Right lobe of liver (tissue), 6 donors: ENCODE measurements at regions of chr2 and their contacts with region 1.

Region 1: GRCh38 chr2:121319953-121320352 is 35.0 kb upstream of the TFCP2L1 start:
- DNase-seq: no peak
- ATAC-seq: peak in 3 of 4 donors; percentile 19 to 50 (median 21)
- H3K4me3 ChIP-seq: no peak overlapping the region
- H3K27ac ChIP-seq: no peak overlapping the region
- H3K4me1 ChIP-seq: no peaks in the 10 kb centered on the region
- H3K27me3 ChIP-seq: no peaks in the 10 kb centered on the region
- CTCF ChIP-seq: no peak
- POLR2A ChIP-seq: no peak

Region 2: GRCh38 chr2:120820263-120820952 is 499.5 kb before region 1 on chr2:
- intact Hi-C with region 1: loop called in 1 of 2 experiments (anchors 5 kb)
- DNase-seq: no peak
- ATAC-seq: no peak
- H3K4me3 ChIP-seq: no peak overlapping the region
- H3K27ac ChIP-seq: no peak overlapping the region
- H3K4me1 ChIP-seq: no peaks in the 10 kb centered on the region
- H3K27me3 ChIP-seq: no peaks in the 10 kb centered on the region
- CTCF ChIP-seq: no peak
- POLR2A ChIP-seq: no peak

Region 3: GRCh38 chr2:121210691-121211090 is 109.3 kb before region 1 on chr2:
- intact Hi-C with region 1: no loop called
- DNase-seq: peak; percentile 67 to 85 (median 80)
- ATAC-seq: peak; percentile 79 to 92 (median 84)
- H3K4me3 ChIP-seq: no peak overlapping the region
- H3K27ac ChIP-seq: no peak overlapping the region
- H3K4me1 ChIP-seq: peaks cover 0 to 18% (median 8%) of the 10 kb centered on the region in 4 donors
- H3K27me3 ChIP-seq: no peaks in the 10 kb centered on the region
- CTCF ChIP-seq: peak in 2 of 4 donors; percentile 7 to 8
- POLR2A ChIP-seq: no peak

Region 4: GRCh38 chr2:121377646-121378045 is 57.7 kb after region 1 on chr2:
- intact Hi-C with region 1: no loop called
- DNase-seq: no peak
- ATAC-seq: no peak
- H3K4me3 ChIP-seq: no peak overlapping the region
- H3K27ac ChIP-seq: no peak overlapping the region
- H3K4me1 ChIP-seq: no peaks in the 10 kb centered on the region
- H3K27me3 ChIP-seq: no peaks in the 10 kb centered on the region
- CTCF ChIP-seq: no peak
- POLR2A ChIP-seq: no peak

Region 5: GRCh38 chr2:121408641-121409040 is 88.7 kb after region 1 on chr2:
- intact Hi-C with region 1: no loop called
- DNase-seq: no peak
- ATAC-seq: no peak
- H3K4me3 ChIP-seq: no peak overlapping the region
- H3K27ac ChIP-seq: no peak overlapping the region
- H3K4me1 ChIP-seq: no peaks in the 10 kb centered on the region
- H3K27me3 ChIP-seq: no peaks in the 10 kb centered on the region
- CTCF ChIP-seq: no peak
- POLR2A ChIP-seq: no peak